Vagina (tissue), 2 donors: ENCODE measurements at regions of chr9 and their contacts with region 1.

Region 1: GRCh38 chr9:93682232-93682968 is 106.0 kb downstream of the PHF2 start:
- DNase-seq: peak in 1 of 2 donors; percentile 72
- H3K4me3 ChIP-seq: no peak overlapping the region
- H3K27ac ChIP-seq: no peak overlapping the region
- H3K4me1 ChIP-seq: no peaks in the 10 kb centered on the region
- H3K27me3 ChIP-seq: no peaks in the 10 kb centered on the region
- CTCF ChIP-seq: peak; percentile 37 to 69 (median 63)
- POLR2A ChIP-seq: no peak

Region 2: GRCh38 chr9:93871294-93871693 is 188.9 kb after region 1 on chr9:
- intact Hi-C with region 1: no loop called
- DNase-seq: no peak
- H3K4me3 ChIP-seq: no peak overlapping the region
- H3K27ac ChIP-seq: no peak overlapping the region
- H3K4me1 ChIP-seq: no peaks in the 10 kb centered on the region
- H3K27me3 ChIP-seq: no peaks in the 10 kb centered on the region
- CTCF ChIP-seq: no peak
- POLR2A ChIP-seq: no peak

Region 3: DNA sequence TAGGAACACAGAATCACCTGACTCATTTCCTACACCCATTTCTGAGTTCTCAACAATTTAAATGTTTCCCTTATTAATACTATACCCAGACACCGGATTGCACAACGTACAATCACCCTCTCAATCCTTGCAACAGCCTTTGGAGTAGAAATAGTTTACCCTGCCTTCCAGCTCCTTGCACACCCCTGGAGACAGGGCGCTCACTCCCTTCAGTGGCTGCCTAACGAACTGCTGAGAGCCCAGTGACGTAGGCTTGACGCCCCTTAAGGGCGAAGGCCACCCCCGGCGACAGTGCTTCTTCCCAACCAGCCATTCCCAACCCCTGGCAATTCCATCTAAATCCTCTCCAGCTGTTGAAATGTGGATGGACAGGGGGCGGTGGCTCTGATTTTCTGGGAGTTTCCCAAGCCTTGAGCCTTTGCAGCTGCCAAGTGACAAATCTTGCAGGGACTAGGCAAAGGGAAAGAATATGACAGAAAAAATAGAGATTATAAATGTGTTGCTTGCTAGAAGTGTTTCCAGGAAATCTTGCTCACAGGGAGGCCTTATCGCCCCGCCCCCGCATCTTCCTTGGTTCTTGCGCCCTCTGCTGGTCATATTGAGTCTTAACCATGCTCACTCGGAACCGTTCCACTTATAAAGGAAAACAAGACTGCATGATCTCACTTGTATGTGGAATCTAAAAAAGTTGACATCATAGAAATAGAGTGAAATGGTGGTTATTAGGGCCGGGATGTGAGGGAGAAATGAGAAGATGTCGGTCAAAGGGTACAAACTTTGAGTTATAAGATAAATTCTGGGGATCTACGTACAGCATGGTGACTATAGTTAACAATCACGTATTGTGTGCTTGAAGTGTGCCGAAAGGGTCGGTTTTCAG is 280.4 kb after region 1 on chr9:
- intact Hi-C with region 1: loop called (anchors 5 kb)
- DNase-seq: no peak
- H3K4me3 ChIP-seq: no peak overlapping the region
- H3K27ac ChIP-seq: no peak overlapping the region
- H3K4me1 ChIP-seq: peaks cover 30% of the 10 kb centered on the region
- H3K27me3 ChIP-seq: peaks cover 17% of the 10 kb centered on the region
- CTCF ChIP-seq: peak; percentile 63 to 75 (median 68)
- POLR2A ChIP-seq: no peak